ENCODE measurements at regions of chr12 and their contacts with region 1.

Region 1: GRCh38 chr12:116582610-116583009 is 23.4 kb downstream of the MAP1LC3B2 start:
- DNase-seq: no peak
- H3K4me3 Mint-ChIP-seq: no peak overlapping the region
- H3K27ac Mint-ChIP-seq: no peak overlapping the region
- H3K4me1 Mint-ChIP-seq: peaks cover 5% of the 10 kb centered on the region
- H3K27me3 Mint-ChIP-seq: peaks cover 3% of the 10 kb centered on the region

Region 2: GRCh38 chr12:116559162-116559935 is 23.3 kb before region 1 on chr12 and contains the start of gene MAP1LC3B2:
- CTCF ChIA-PET with region 1: interaction called, 13 read pairs
- POLR2A ChIA-PET with region 1: no interaction called
- DNase-seq: peak; percentile 94
- H3K4me3 Mint-ChIP-seq: peak within 1 kb of the TSS; percentile 68
- H3K27ac Mint-ChIP-seq: peak within 1 kb of the TSS; percentile 99
- H3K4me1 Mint-ChIP-seq: peaks cover 57% of the 10 kb centered on the region
- H3K27me3 Mint-ChIP-seq: peaks cover 2% of the 10 kb centered on the region
- total RNA-seq, gene MAP1LC3B2: 1.0 to 1.5 TPM

Region 3: DNA sequence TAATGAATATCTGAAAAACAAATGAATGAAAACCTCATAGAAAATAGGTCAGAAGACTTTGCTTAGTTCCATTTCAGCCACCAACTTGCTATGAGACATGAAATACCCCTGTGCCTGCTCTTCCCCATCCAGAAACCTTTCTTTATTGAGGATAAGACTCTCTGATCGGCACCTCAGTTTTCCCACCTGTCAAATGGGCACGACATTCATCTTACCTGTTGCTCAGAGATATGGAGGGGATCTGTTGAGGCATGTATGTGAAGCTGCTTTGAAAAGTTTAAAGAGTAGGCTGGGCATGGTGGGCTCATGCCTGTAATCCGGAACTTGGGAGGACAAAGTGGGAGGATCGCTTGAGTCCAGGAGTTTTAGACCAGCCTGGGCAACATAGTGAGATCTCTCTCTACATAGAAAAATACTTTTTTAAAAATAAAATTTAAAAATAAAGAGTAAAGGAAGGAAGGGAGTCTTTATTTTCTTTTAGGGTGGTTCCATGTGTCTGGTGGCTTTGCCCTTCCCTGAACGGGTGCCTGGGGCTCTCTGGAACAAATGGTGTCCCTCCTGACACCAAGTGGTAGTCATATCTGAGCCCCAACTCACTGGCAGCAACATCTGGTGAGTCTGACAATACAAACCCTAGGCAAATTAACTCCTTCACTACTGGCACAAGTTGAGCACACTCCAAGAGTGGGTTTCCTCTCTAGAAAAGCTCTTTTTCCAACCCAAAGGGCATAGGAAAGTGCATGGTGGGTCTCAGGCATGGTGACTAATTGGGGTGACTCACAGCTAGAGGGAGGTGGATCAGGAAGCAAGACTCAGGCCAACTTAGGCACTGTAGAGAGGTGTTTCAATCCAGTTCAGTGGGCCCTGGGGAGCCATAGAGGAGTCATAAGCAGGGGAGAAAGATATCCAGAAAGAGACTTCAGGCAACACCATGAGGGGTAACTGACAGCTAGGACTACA is 18.6 kb after region 1 on chr12:
- CTCF ChIA-PET with region 1: no interaction called
- POLR2A ChIA-PET with region 1: no interaction called
- DNase-seq: no peak
- H3K4me3 Mint-ChIP-seq: no peak overlapping the region
- H3K27ac Mint-ChIP-seq: no peak overlapping the region
- H3K4me1 Mint-ChIP-seq: peaks cover 42% of the 10 kb centered on the region
- H3K27me3 Mint-ChIP-seq: peaks cover 7% of the 10 kb centered on the region

Region 4: DNA sequence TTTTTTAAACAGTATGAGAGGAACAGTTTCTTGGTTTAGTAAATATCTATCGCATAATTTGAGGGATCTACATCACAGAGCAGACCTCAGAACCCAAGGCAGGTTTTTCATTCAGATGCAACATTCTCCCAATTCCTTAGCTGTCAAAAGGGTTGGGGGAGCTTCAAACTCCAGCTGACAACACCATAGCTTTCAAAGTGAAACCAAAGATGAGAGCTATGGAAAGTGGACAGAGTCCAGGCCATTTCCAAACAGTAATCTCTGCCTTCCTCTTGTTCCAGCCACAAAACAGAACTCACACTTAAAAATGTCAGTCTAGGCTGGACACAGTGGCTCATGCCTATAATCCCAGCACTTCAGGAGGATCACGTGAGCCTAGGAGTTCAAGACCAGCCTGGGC is 67.5 kb after region 1 on chr12:
- CTCF ChIA-PET with region 1: no interaction called
- POLR2A ChIA-PET with region 1: no interaction called
- DNase-seq: no peak
- H3K4me3 Mint-ChIP-seq: no peak overlapping the region
- H3K27ac Mint-ChIP-seq: no peak overlapping the region
- H3K4me1 Mint-ChIP-seq: peaks cover 5% of the 10 kb centered on the region
- H3K27me3 Mint-ChIP-seq: peaks cover 11% of the 10 kb centered on the region

Measured in activated CD4-positive, alpha-beta T cell treated with anti-CD3 and anti-CD28 coated beads, Interleukin-2, amount 10 ng/mL, durations not matched to agents 7 days and 5 days (primary cell).